ENCODE measurements at regions of chr1 and their contacts with region 1.

Region 1: GRCh38 chr1:228021362-228021961 is 14.7 kb downstream of the WNT3A start:
- DNase-seq: no peak
- H3K4me3 ChIP-seq: no peak overlapping the region
- H3K4me3 Mint-ChIP-seq: no peak overlapping the region
- H3K27ac ChIP-seq: no peak overlapping the region
- H3K27ac Mint-ChIP-seq: no peak overlapping the region
- H3K4me1 ChIP-seq: no peaks in the 10 kb centered on the region
- H3K4me1 Mint-ChIP-seq: no peaks in the 10 kb centered on the region
- H3K27me3 ChIP-seq: peaks cover 0 to 4% of the 10 kb centered on the region in 2 donors
- H3K27me3 Mint-ChIP-seq: peaks cover 0 to 11% (median 7%) of the 10 kb centered on the region in 3 donors
- CTCF ChIP-seq: no peak

Region 2: DNA sequence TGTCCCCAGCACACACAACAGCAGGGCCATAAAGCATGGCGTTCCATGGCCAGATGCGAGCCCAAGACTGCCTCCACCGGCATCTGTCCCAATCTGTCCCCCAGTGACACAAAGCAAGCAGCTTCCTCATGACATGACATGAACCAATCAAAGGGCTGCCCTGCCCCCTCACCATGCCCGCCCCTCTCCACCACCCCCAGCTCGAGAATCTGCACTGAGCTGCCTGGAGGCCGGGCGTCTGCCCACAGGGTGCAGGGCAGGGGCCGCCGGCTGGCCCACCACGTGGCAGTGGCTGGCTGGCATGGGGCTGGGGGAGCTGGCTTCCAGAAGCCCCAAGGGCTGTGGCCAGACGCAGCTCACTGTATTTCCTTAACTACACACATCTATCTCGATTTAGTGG is 101.6 kb before region 1 on chr1:
- intact Hi-C with region 1: no loop called
- DNase-seq: no peak
- H3K4me3 ChIP-seq: no peak overlapping the region
- H3K4me3 Mint-ChIP-seq: no peak overlapping the region
- H3K27ac ChIP-seq: no peak overlapping the region
- H3K27ac Mint-ChIP-seq: no peak overlapping the region
- H3K4me1 ChIP-seq: no peaks in the 10 kb centered on the region
- H3K4me1 Mint-ChIP-seq: no peaks in the 10 kb centered on the region
- H3K27me3 ChIP-seq: no peaks in the 10 kb centered on the region
- H3K27me3 Mint-ChIP-seq: peaks cover 0 to 4% (median 0%) of the 10 kb centered on the region in 3 donors
- CTCF ChIP-seq: no peak

Region 3: DNA sequence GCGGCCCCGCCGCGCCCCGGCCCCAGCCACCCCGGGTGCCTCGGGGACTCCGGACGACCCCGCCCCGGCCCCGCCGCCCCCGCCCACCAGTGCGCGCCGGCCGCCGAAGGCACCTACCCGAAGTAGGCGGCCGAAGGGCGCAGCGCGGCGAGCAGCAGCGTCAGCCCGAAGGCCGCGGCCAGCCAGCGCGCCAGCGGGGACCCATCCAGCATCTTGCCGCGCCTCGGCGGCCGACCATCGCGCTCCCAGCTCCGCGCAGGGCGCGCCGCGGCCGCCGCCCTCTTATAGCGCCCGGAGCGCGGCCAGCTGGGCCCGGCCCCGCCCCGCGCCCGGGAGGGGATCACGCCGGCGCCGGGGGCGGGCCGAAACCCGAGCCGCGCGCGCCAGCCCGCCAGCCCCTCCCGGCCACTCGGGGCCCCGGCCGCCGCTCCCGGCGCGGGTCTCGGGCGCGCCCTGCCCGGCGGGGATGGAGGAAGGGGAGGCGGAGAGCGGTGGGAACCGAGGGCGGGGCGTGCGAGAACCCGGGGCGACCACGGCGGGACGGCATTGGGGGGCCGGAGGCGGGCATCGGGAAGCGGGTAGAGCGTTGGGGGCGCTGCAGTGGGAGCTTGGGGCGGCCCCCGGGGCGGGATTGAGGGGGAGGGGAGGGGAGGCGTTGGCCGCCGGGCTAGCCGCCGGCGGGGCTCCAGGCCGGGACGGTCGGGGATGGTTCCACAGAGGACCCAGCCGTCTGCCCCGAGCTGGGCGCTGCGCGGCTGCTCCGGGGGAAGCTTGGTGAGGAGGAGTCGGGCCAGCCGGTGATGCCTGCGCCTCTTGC is 73.6 kb before region 1 on chr1 and contains the start of gene WNT9A:
- intact Hi-C with region 1: no loop called
- DNase-seq: no peak
- H3K4me3 ChIP-seq: peak within 1 kb of the TSS in 1 of 3 experiments; percentile 30
- H3K4me3 Mint-ChIP-seq: peak within 1 kb of the TSS; percentile 45 to 81
- H3K27ac ChIP-seq: no peak within 1 kb of the TSS
- H3K27ac Mint-ChIP-seq: no peak within 1 kb of the TSS
- H3K4me1 ChIP-seq: peaks cover 0 to 10% of the 10 kb centered on the region in 2 donors
- H3K4me1 Mint-ChIP-seq: peaks cover 9% of the 10 kb centered on the region
- H3K27me3 ChIP-seq: peaks cover 9 to 45% of the 10 kb centered on the region in 2 donors
- H3K27me3 Mint-ChIP-seq: peaks cover 36 to 52% (median 51%) of the 10 kb centered on the region in 3 donors
- CTCF ChIP-seq: no peak
- polyA plus RNA-seq, gene WNT9A: not detected

Region 4: DNA sequence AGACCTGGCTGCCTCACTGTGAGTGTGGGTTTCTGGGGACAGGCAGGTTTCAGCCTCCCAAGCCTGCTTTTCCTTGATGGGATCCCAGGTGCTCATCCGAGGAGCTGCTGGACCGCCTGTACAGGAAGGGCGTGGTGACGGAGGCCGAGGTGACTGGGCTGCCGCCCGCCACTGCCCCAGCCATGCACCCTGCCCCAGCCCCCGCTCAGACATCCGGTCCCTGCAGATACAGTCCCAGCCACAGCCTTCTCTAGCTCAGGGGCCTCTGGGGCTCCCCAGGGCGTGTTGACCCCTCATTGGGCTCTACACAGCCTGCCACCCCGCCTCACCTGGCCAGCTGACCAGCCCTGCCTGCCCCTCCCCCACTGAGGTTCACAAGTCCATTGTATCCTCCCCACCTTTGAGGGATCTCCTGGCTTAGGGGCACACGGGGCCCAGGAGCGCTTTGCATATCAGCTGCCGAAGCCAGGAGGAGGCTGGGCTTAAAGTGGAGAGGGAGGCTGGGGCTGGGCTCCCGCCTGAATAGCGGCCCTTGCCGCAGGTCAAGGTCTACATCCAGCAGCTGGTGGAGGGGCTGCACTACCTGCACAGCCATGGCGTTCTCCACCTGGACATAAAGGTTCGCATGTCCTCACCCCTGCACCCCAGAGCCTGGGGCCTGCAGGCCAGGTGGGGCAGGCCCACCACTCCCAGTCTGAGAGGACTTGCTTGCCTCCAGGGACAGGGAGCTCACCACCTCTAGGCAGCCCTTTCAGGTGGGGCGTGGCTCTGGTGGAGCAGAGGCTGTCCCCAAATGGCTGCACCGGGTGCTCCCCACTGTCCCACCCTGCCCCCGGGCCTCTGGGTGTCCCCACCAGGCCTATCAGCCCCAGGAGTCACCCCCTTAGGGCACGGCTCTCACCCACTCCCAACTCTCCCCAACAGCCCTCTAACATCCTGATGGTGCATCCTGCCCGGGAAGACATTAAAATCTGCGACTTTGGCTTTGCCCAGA is 346.6 kb after region 1 on chr1:
- intact Hi-C with region 1: loop called in 1 of 2 experiments (anchors 10 kb)
- DNase-seq: no peak
- H3K4me3 ChIP-seq: no peak overlapping the region
- H3K4me3 Mint-ChIP-seq: no peak overlapping the region
- H3K27ac ChIP-seq: no peak overlapping the region
- H3K27ac Mint-ChIP-seq: no peak overlapping the region
- H3K4me1 ChIP-seq: no peaks in the 10 kb centered on the region
- H3K4me1 Mint-ChIP-seq: no peaks in the 10 kb centered on the region
- H3K27me3 ChIP-seq: no peaks in the 10 kb centered on the region
- H3K27me3 Mint-ChIP-seq: peaks cover under 1 to 4% (median 3%) of the 10 kb centered on the region in 3 donors
- CTCF ChIP-seq: no peak

Measured in CD14-positive monocyte (primary cell).